ENCODE measurements at regions of chr2 and their contacts with region 1.

Region 1: DNA sequence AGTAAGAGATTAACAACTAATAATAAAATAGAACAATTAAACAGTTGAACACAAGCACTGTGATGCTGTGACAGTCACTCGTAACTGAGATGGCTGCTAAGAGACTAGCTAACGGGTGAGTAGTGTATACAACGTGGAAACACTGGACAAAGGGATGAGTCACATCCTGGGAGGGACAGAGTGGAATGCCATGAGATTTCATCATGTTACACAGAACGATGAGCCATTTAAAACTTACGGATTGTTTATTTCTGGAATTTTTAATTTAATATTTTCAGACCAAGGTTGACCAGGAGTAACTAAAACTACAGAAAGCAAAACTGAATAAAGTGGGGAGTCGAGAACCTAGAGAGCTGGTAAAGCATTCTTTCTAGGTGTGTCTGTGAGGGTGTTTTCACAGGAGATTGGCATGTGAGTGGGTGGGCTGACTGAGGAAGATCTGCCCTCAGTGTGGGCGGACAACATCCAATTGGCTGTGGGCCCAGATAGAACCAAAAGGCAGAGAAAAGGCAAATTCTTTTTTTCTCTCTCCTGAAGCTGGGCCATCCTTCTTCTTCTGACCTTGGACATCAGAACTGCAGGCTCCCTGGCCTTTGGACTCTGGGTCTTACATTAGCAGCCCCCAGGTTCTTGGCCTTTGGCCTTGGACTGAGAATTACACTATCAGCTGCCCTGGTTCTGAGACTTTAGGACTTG is 14.6 kb downstream of the TMSB10 start:
- DNase-seq: peak; percentile 38
- H3K4me3 ChIP-seq: peak overlapping the region; percentile 23
- H3K27ac ChIP-seq: peak overlapping the region; percentile 71
- H3K4me1 ChIP-seq: peaks cover 39% of the 10 kb centered on the region
- CTCF ChIP-seq: no peak

Region 2: DNA sequence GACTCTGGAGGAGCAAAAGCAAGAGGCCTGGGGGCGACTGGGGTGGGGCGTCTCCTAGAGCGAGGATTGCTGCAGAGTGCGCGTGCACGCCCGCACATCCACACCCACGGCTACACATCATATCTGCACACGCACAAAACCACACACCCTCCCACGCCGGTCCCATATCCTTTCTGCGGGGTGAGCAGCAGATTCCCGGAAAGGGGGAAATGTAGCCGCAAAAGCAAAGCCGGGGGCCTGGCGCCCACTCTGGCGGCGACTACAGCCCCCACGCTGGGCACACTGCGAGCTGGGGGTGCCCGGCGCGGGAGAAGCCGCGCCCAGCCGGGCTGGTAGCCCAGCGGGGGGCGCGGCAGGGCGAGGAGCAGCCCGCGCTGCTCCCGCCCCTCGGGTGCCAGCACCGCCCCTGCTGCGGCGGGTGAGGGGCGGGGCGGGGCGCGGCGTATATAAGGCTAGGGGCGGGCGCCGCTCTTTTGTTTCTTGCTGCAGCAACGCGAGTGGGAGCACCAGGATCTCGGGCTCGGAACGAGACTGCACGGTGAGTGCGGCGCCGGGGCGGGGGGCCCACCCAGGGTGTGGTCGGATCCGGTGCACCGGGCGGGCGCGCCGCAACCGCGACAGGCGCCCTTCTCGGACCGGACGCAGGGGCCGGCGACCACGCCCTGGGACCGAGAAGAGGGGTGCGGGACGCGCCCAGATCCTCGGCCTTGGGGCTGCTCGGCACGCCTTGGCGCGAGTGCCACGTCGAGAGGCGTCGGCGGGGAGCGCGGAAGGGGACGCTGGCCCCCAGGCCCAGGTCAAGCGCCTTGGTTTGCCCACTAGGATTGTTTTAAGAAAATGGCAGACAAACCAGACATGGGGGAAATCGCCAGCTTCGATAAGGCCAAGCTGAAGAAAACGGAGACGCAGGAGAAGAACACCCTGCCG is 14.6 kb before region 1 on chr2 and contains the start of gene TMSB10:
- CTCF ChIA-PET with region 1: interaction called, 12 read pairs
- POLR2A ChIA-PET with region 1: interaction called, 41 read pairs
- intact Hi-C with region 1: loop called (anchors 1 kb)
- DNase-seq: peak; percentile 86
- H3K4me3 ChIP-seq: peak within 1 kb of the TSS; percentile 95
- H3K27ac ChIP-seq: peak within 1 kb of the TSS; percentile 51
- H3K4me1 ChIP-seq: peaks cover 15% of the 10 kb centered on the region
- CTCF ChIP-seq: peak; percentile 59
- total RNA-seq, gene TMSB10: 1,901 and 3,039 TPM in 2 replicates

Region 3: DNA sequence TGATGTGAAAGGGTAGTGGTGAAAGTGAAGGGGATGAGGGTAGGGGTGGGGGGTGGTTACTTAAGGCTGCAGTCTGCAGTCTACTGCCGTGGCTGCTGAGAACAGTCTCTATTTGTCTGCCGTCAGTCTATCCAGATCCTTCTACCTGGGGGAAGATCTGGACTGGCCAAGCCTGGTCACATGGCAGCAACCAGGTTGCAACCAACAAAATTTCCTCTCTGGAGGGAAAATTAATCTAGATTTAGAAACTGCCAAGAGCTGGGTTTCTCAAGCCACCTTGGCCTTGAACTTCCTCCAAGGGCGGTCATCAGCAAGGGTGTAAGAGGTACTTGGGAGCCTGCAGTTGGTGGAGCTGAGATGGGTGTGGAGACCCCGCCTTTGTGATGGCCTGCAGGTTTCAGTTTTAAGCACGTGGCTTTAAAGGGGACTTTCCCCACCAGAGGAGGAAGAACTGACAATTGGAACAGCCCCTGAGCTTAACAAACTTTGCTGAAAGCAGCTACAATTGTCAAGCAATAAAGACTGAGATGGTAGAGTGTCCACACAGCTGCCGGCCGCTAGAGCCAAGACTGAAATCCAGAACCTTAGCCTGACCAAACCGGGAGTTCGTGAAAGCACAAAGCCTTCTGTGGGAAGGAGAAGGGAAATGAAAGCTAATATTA is 19.5 kb after region 1 on chr2:
- CTCF ChIA-PET with region 1: interaction called, 11 read pairs
- POLR2A ChIA-PET with region 1: interaction called, 22 read pairs
- intact Hi-C with region 1: no loop called
- DNase-seq: peak; percentile 94
- H3K4me3 ChIP-seq: peak overlapping the region; percentile 31
- H3K27ac ChIP-seq: peak overlapping the region; percentile 80
- H3K4me1 ChIP-seq: peaks cover 51% of the 10 kb centered on the region
- CTCF ChIP-seq: no peak